GM13977 (cell line): ENCODE measurements at regions of chr15 and their contacts with region 1.

Region 1: GRCh38 chr15:100602064-100602822 is at the starts of genes ASB7 and LINS1:
- DNase-seq: peak; percentile 92
- CTCF ChIP-seq: no peak

Region 2: GRCh38 chr15:99250494-99251435 is 1351.5 kb before region 1 on chr15:
- in situ Hi-C with region 1: loop called (anchors 25 kb)
- DNase-seq: peak; percentile 95
- CTCF ChIP-seq: no peak

Region 3: DNA sequence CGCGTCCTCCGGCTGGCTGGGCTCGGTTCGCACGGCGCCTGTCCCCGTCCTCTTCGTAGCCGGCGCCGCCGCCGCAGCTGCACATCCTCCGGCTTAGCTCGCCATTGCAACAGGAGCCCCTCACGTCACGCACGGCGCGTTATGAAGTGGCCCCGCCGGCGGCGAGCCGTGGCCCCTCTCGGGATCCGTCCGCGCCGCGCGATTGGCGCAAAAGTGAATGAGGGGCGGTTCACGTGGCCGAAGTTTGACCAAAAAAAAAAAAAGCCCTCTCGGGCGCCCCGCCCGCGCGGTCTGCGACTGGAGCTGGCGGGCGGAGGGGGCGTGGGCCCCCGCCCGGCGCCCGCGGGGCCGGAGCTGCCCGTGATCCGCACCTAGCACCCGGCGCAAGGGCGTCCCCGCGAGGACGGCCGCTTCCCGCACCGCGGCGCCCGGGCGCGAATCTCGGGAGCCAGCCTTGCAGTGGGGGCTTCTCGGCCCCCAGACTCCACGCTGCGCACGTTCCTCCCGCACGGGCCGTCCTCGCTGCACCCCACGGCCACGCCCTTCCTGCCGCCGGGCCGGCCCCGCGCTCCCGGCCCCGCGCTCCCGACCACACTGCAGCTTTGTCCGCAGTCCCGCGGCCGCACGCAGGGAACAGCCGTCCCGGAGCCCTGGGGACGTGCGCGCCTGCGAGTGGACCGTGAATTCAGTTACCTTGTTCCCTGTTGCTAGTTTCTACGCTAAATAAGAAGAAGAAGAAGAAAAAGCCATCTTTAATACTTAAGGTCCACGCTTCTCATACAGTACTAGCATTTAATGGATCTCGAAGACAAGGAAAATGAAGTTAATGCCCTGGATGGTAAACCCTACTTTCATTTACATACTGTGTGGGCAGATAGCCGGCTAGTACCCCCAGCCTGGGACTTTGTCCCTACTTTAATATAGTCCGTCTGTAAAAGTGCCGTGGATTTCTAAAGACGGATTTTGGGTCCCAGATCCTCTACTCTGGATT is 649.9 kb after region 1 on chr15 and contains the start of gene CHSY1:
- in situ Hi-C with region 1: loop called (anchors 25 kb)
- DNase-seq: peak; percentile 94
- CTCF ChIP-seq: peak; percentile 57